Dorsolateral prefrontal cortex (tissue), 120 donors: ENCODE measurements at regions of chr17 and their contacts with region 1.

Region 1: DNA sequence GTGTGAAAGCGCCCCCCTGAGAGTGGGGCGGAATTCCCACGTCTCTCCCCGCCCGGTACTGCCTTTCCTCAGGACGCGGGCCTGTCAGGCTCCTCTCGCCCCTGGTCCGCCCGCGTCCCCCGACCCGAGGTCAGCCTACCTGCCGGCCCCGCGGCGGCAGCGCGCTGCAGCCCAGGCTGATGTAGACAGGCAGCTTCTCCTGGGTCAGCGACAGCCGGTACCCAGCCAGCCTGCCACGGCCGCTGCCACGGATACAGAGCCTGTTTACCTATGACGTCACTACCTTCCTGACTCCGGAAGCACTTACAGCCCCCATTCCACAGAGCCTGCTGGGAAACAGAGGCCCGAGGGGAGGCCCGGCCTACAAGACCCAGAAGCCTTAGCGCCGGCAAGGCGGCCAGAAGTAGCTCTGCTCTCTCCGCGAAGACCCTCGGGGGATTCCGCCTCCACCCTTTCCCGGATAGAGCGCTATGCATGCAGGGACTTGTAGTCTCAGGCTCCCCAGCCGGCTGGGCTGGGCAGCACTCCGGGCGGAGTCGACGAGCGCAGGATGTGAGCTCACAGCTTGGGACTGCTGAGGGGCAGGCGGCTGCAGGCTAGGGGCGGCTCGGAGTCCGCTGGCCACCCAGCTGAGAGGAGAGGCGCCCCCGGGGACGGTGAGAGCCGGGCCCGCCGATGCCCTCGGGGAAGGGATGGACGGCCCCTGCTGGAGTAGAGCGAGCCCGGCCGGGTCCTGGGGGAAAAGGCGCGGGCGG is at the starts of genes IFT20 and TNFAIP1:
- DNase-seq: peak; percentile 97 to 100 (median 99)
- H3K4me3 ChIP-seq: peak within 1 kb of the TSS; percentile 76 to 100 (median 98)
- H3K27ac ChIP-seq: peak within 1 kb of the TSS; percentile 29 to 96 (median 88)
- H3K27me3 ChIP-seq: no peaks in the 10 kb centered on the region
- CTCF ChIP-seq: peak in 35 of 56 donors; percentile 8 to 59 (median 38)
- total RNA-seq, gene IFT20: 36.1 to 75.2 (median 53.6) TPM
- total RNA-seq, gene TNFAIP1: 35.9 to 75.5 (median 51.0) TPM

Region 2: DNA sequence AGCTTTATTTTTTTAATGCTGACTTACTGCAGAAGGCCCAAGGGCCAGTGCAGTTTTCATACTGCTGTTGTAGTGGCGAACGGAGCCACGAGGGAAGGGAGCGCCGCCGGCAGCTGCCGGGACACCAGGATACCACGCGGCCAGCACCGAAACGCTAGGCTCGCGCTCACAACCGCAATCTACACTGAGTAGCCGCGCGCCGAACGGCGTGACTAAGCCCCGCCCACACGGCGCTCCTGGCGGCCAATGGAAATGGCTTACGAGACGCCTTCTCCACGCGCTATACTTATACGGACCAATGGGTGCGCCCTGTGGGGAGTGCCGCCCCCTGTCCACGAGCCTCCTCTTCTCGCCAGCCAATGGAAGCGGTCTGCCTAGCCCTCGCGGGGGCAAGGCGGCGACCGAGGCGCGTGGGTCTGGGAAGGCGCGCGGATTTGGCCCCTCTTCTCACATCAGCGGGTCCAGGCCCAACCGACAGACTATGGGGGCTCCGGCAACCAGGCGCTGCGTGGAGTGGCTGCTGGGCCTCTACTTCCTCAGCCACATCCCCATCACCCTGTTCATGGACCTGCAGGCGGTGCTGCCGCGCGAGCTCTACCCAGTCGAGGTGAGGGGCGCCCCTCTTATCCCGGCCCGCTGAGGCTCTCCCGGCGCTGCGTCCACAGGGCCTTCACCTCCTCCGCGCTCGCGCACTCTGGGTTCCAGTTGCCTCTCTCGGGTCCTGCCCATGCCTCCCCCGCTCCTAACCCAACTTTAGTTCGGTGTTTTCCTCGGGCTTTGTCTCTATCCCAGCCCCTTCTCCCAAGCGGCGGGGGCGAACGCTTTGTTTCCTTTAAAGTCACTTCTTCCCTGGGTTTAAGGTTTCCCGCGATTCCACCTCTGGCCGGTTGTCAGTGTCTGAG is 16.4 kb before region 1 on chr17 and contains the start of gene TMEM97:
- intact Hi-C with region 1: loop called in 1 of 2 experiments (anchors 2 kb)
- DNase-seq: peak; percentile 94 to 99 (median 98)
- H3K4me3 ChIP-seq: peak within 1 kb of the TSS; percentile 51 to 95 (median 81)
- H3K27ac ChIP-seq: peak within 1 kb of the TSS in 24 of 59 donors; percentile 3 to 82 (median 36)
- H3K27me3 ChIP-seq: no peaks in the 10 kb centered on the region
- CTCF ChIP-seq: peak in 45 of 56 donors; percentile 4 to 71 (median 40)
- total RNA-seq, gene TMEM97: 8.3 to 31.7 (median 16.3) TPM

Region 3: DNA sequence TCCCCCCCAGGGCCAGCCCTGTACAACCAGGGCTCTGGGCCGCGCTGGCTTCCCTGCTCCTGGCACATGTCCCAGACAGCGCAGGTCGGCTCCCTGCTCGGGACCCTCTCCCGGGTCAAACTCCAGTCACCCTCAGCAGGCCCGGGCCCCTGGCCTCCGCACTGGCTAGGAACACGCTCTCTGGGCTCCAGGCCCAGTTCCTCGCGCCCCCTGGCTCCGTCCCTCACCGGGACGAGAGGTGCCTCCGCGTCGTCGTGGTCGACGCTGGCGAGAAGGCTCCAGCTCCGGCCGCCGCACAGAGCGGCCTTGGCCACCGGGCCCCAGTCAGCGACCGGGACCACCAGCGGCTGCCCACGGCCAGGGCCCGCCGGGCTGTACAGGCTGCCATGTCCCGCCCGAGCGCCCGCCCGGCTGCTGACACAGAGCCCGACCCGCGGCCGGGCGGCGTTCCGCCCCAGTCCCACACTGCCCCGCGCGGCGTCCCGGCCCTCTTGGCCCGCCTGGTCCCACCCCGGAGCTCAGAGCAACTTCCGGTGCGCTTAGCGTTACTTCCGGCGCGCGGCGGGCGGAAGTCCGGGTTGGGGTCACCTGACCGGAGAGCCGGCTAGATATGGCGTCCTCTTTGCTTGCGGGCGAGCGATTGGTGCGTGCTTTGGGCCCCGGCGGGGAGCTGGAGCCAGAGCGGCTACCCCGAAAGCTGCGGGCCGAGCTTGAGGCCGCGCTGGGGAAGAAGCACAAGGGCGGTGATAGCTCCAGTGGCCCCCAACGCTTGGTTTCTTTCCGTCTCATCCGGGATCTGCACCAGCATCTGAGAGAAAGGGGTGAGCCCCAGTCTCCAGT is 21.9 kb after region 1 on chr17 and contains the start of gene POLDIP2:
- intact Hi-C with region 1: loop called (anchors 1 kb)
- DNase-seq: peak; percentile 92 to 98 (median 94)
- H3K4me3 ChIP-seq: peak within 1 kb of the TSS; percentile 72 to 100 (median 98)
- H3K27ac ChIP-seq: peak within 1 kb of the TSS in 58 of 59 donors; percentile 3 to 94 (median 82)
- H3K27me3 ChIP-seq: no peaks in the 10 kb centered on the region
- CTCF ChIP-seq: peak in 47 of 56 donors; percentile 6 to 64 (median 35)
- total RNA-seq, gene POLDIP2: 49.5 to 88.7 (median 68.8) TPM

Region 4: GRCh38 chr17:28951991-28952975 is 616.9 kb after region 1 on chr17:
- intact Hi-C with region 1: loop called in 1 of 2 experiments (anchors 5 kb)
- DNase-seq: peak; percentile 97 to 100 (median 98)
- H3K4me3 ChIP-seq: peak overlapping the region; percentile 65 to 99 (median 86)
- H3K27ac ChIP-seq: peak overlapping the region; percentile 93 to 100 (median 100)
- H3K27me3 ChIP-seq: no peaks in the 10 kb centered on the region
- CTCF ChIP-seq: peak in 38 of 56 donors; percentile 7 to 55 (median 28)